GM23248 (cell line): ENCODE measurements at regions of chr4 and their contacts with region 1.

Region 1: DNA sequence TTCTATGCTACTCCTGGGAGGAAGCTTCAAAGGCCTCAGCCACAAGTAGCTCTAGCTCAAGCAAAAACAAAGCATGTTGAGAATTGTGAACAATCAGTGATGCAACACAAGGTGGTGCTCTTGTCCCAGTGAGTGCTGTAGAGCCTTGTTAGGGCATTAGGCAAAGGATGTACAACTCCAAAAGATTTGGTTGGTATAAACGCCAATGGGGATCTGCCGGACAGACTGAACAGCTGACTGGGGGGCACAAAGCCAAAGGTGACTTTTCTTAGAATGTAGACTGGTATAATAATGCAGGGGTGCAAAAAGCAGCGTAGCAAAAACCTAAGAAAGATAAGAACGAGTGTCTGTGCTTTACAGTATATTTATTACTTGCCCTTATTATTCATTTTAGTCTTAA is 62.6 kb upstream of the ALB start:
- DNase-seq: peak; percentile 69
- H3K4me3 ChIP-seq: no peak overlapping the region
- H3K27ac ChIP-seq: no peak overlapping the region
- H3K4me1 ChIP-seq: no peaks in the 10 kb centered on the region
- H3K27me3 ChIP-seq: no peaks in the 10 kb centered on the region

Region 2: DNA sequence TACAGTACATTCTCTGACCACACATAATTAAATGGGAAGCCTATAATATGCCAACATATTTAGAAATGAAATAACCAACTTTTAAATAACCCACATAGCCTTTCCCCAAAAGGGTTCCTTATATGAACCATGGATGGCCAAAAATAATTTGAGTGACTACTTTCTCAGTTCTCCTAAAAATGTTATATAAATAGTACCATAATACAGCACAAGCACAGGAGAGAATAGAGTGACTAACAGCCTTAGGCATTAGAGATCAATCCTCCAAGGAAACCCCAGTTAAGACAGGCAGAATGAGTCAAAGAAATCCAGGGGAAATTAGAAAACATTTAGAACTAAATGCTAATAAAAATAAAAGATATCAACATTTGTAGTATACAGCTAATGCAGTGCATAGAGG is 133.1 kb before region 1 on chr4:
- in situ Hi-C with region 1: no loop called
- DNase-seq: peak; percentile 76
- H3K4me3 ChIP-seq: no peak overlapping the region
- H3K27ac ChIP-seq: peak overlapping the region; percentile 36
- H3K4me1 ChIP-seq: peaks cover 16% of the 10 kb centered on the region
- H3K27me3 ChIP-seq: no peaks in the 10 kb centered on the region

Region 3: DNA sequence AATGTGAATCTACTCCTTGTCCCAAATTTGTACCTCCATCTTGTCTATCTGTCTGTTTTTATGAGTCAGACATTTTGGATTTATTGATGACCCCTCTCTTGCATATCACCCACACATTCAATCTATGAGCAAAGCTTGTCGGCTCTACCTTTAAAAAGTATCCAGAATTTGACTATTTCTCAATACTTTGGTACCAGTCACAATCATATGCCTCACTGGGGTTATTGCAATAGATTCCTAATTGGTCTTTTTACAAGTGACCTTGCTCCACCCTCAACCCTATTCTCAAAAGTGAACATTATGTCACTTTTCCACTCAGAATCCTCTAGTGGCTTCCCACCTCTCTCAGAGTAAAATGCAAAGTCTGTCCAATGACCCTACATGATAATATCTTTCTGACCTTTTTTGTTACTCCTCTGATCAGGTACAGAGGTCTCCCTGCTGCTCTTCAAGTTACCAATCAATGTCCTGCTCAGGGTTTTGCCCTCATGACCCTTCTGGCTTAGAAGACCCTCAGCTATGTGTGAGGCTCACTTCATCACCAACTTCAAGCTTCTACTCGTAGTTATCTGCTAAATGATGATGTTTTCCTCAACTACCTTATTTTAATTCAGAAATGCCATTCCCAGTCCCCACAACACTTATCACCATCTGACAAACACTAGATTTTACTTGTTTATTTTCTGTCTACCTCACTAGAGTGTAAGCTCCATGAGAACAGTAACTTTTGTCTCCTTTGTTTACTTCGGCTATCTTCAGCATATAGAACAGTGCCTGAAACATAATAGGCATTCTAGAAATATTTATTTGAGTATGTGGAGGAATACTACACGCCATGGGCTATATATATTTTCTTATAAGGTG is 117.0 kb after region 1 on chr4:
- in situ Hi-C with region 1: no loop called
- DNase-seq: no peak
- H3K4me3 ChIP-seq: no peak overlapping the region
- H3K27ac ChIP-seq: no peak overlapping the region
- H3K4me1 ChIP-seq: no peaks in the 10 kb centered on the region
- H3K27me3 ChIP-seq: 0 out of 2 replicates have a peak, but pooled peaks cover 3% of the 10 kb centered on the region

Region 4: GRCh38 chr4:73631565-73632226 is 290.2 kb after region 1 on chr4:
- in situ Hi-C with region 1: loop called (anchors 25 kb)
- DNase-seq: no peak
- H3K4me3 ChIP-seq: no peak overlapping the region
- H3K27ac ChIP-seq: no peak overlapping the region
- H3K4me1 ChIP-seq: no peaks in the 10 kb centered on the region
- H3K27me3 ChIP-seq: peaks cover 23% of the 10 kb centered on the region